Heart right ventricle (tissue), 16 donors: ENCODE measurements at regions of chr9 and their contacts with region 1.

Region 1: GRCh38 chr9:994005-994404 is 17.6 kb downstream of the DMRT3 start:
- DNase-seq: no peak
- ATAC-seq: no peak
- H3K4me3 ChIP-seq: no peak overlapping the region
- H3K27ac ChIP-seq: no peak overlapping the region
- H3K4me1 ChIP-seq: peaks cover 0 to 6% (median 0%) of the 10 kb centered on the region in 9 donors
- H3K27me3 ChIP-seq: peaks cover 0 to 44% (median 28%) of the 10 kb centered on the region in 7 donors
- CTCF ChIP-seq: no peak

Region 2: GRCh38 chr9:347667-348292 is 646.2 kb before region 1 on chr9:
- intact Hi-C with region 1: loop called in 1 of 10 experiments (anchors 10 kb)
- DNase-seq: no peak
- ATAC-seq: peak in 6 of 8 donors; percentile 40 to 74 (median 58)
- H3K4me3 ChIP-seq: no peak overlapping the region
- H3K27ac ChIP-seq: no peak overlapping the region
- H3K4me1 ChIP-seq: peaks cover 0 to under 1% (median 0%) of the 10 kb centered on the region in 9 donors
- H3K27me3 ChIP-seq: peaks cover 0 to 34% (median 4%) of the 10 kb centered on the region in 7 donors
- CTCF ChIP-seq: peak; percentile 32 to 82 (median 66)

Region 3: GRCh38 chr9:893843-894420 is 100.1 kb before region 1 on chr9:
- intact Hi-C with region 1: loop called in 1 of 10 experiments (anchors 10 kb)
- DNase-seq: peak in 1 of 2 donors; percentile 13
- ATAC-seq: peak in 5 of 8 donors; percentile 44 to 79 (median 74)
- H3K4me3 ChIP-seq: no peak overlapping the region
- H3K27ac ChIP-seq: no peak overlapping the region
- H3K4me1 ChIP-seq: peaks cover 0 to 7% (median 0%) of the 10 kb centered on the region in 9 donors
- H3K27me3 ChIP-seq: peaks cover 0 to 27% (median 9%) of the 10 kb centered on the region in 7 donors
- CTCF ChIP-seq: peak; percentile 31 to 76 (median 69)

Region 4: DNA sequence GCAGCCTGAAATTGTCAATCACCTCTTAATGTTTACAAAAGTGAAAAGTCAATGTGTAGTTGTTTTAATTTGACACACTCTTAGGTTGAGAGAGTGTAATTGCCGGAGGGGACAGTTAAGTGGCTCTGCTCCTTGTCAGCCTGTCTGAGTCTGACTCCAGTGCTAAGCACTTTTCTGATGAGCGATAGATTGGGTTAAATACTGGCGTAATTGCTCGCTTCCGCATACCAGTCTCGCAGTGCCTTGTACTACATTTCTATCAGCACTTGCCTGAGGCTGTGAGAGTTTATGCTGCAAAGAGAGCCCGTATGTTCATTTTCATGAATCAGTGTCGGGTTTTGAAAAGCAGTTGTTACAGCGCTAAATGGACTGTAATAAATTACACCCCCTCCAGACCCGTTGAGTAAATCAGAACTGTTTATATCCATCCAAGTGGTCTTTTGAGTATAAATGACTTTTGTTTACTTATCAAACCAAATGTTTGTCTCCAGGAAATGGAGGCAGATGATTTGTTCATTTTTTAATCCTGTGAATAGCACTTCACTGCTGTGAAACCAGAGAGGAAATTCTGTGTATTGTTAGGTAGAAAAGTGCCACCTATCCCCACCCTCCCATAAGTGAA is 58.5 kb before region 1 on chr9:
- intact Hi-C with region 1: loop called in 1 of 10 experiments (anchors 10 kb)
- DNase-seq: no peak
- ATAC-seq: peak in 1 of 8 donors; percentile 55
- H3K4me3 ChIP-seq: peak overlapping the region in 3 of 10 donors; percentile 4 to 12 (median 11)
- H3K27ac ChIP-seq: no peak overlapping the region
- H3K4me1 ChIP-seq: no peaks in the 10 kb centered on the region
- H3K27me3 ChIP-seq: peaks cover 0 to 76% (median 57%) of the 10 kb centered on the region in 7 donors
- CTCF ChIP-seq: no peak

Region 5: GRCh38 chr9:1031951-1032601 is 38.1 kb after region 1 on chr9:
- intact Hi-C with region 1: no loop called
- DNase-seq: no peak
- ATAC-seq: no peak
- H3K4me3 ChIP-seq: no peak overlapping the region
- H3K27ac ChIP-seq: no peak overlapping the region
- H3K4me1 ChIP-seq: no peaks in the 10 kb centered on the region
- H3K27me3 ChIP-seq: peaks cover 0 to 75% (median 60%) of the 10 kb centered on the region in 7 donors
- CTCF ChIP-seq: no peak